Calu3 (cell line): ENCODE measurements at regions of chr17 and their contacts with region 1.

Region 1: DNA sequence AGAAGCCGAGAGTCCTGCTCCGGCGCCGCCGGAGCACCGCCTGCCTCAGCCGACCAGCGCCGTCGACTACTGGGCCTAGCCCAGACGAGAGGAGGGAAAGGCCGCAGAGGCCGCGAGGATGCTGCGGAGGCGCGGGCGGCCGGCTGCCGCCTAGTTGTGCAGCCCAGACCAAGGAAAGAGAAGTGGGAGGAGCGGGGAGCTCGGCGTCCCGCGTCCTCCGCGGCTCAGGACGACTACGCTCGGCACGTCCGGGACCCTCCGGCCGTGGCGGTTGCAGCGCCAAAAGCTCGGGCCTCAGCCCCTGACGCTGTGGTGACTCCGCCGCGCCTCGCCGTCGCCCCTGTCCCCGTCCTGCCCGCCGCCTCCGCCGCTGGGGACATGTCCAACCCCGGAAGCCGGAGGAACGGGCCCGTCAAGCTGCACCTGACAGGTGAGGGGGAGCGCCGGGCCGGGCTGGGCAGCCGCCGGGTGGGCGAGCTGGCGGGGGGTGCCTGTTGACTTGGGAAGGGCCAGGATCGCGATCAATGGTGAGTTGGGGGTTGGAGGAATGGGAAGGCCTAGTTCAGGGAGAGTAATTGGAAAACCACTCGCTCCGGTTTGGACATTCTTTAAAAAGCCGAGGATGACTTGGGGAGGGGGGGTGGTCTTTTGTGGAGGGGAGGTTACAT is 37.7 kb downstream of the RNF135 start:
- DNase-seq: peak; percentile 68
- H3K4me3 Mint-ChIP-seq: peak overlapping the region; percentile 94
- H3K27ac Mint-ChIP-seq: peak overlapping the region; percentile 52
- H3K4me1 Mint-ChIP-seq: peaks cover 18% of the 10 kb centered on the region
- H3K27me3 Mint-ChIP-seq: no peaks in the 10 kb centered on the region
- CTCF ChIP-seq: no peak

Region 2: DNA sequence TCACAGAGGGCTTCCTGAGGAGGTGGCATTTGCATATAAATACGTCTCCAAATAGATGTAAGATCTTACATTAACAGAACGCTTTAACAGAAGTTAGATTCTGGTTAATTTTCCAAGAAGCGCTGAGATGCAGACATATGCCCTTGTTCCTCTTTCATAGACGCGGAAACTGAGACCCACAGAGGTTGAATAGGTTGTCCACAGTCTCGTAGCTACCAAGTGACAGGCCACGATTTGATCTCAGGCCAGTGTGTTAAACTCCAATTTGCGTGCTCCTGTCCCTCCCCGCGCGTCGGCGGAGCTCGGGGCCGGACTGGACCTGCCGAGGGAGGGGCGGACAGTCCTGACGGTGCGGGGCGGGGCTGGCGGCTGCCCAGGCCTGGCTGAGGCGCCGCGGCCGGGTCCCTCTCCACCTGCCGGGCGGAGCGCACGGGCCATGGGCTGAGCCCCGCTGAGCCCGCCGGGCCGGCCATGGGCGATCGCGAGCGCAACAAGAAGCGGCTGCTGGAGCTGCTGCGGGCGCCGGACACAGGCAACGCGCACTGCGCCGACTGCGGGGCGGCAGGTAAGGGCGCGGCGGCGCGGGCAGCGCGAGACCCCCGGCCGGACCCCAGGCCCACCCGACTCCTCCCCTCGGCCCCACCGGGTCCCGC is 86.8 kb before region 1 on chr17 and contains the start of gene ADAP2:
- CTCF ChIA-PET with region 1: interaction called, 11 read pairs
- intact Hi-C with region 1: no loop called
- DNase-seq: peak; percentile 60
- H3K4me3 Mint-ChIP-seq: peak within 1 kb of the TSS; percentile 76
- H3K27ac Mint-ChIP-seq: no peak within 1 kb of the TSS
- H3K4me1 Mint-ChIP-seq: peaks cover 11% of the 10 kb centered on the region
- H3K27me3 Mint-ChIP-seq: peaks cover 59% of the 10 kb centered on the region
- CTCF ChIP-seq: no peak
- total RNA-seq, gene ADAP2: 2.1 TPM in 1 of 2 replicates, not detected in the other

Region 3: DNA sequence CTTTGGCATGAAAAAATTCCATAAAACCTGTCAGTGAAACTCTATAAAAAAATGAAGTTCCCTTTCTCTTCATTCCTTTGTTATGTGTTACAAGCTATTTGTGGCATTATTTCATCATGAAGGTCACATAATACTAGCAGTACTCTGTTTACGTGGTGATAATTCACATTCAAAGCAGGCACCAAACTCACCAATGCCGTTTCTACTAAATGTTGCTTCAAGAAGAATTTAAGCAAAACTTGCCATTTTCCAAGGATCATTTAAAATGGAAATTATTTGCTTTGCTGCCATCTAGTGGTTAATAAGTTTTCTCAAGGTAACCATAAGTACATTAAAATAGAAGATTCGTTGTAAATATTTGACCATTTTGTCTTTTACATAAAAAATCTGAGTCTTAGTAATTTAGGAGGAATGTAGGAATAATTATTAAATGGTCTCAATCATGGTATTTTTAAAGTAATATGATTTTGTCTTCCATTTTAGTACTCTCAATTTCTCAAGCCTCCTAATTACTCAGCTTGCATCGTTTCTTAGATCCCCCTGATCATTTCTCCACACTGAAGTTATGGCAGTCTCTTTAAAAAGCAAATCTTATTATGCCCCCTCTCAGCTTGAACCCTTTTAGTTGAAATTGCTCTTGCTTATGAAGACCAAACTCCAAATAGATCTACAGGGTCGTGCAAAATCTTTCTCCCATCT is 207.7 kb after region 1 on chr17:
- CTCF ChIA-PET with region 1: interaction called, 3 read pairs
- intact Hi-C with region 1: loop called (anchors 1 kb)
- DNase-seq: no peak
- H3K4me3 Mint-ChIP-seq: no peak overlapping the region
- H3K27ac Mint-ChIP-seq: no peak overlapping the region
- H3K4me1 Mint-ChIP-seq: no peaks in the 10 kb centered on the region
- H3K27me3 Mint-ChIP-seq: no peaks in the 10 kb centered on the region
- CTCF ChIP-seq: no peak